ENCODE measurements at regions of chr4 and their contacts with region 1.

Region 1: GRCh38 chr4:164731827-164732474 is 22.0 kb upstream of the SMIM31 start:
- DNase-seq: peak; percentile 35
- CTCF ChIP-seq: peak; percentile 77

Region 2: GRCh38 chr4:163544407-163545038 is 1187.4 kb before region 1 on chr4:
- in situ Hi-C with region 1: loop called (anchors 25 kb)
- DNase-seq: peak; percentile 69
- CTCF ChIP-seq: peak; percentile 93

Region 3: GRCh38 chr4:163681208-163681821 is 1050.6 kb before region 1 on chr4:
- in situ Hi-C with region 1: loop called (anchors 25 kb)
- DNase-seq: peak; percentile 64
- CTCF ChIP-seq: peak; percentile 57

Region 4: GRCh38 chr4:164012396-164013027 is 719.4 kb before region 1 on chr4:
- in situ Hi-C with region 1: loop called (anchors 25 kb)
- DNase-seq: peak; percentile 3
- CTCF ChIP-seq: peak; percentile 26